Esophagus muscularis mucosa (tissue), 4 donors: ENCODE measurements at regions of chr15 and their contacts with region 1.

Region 1: DNA sequence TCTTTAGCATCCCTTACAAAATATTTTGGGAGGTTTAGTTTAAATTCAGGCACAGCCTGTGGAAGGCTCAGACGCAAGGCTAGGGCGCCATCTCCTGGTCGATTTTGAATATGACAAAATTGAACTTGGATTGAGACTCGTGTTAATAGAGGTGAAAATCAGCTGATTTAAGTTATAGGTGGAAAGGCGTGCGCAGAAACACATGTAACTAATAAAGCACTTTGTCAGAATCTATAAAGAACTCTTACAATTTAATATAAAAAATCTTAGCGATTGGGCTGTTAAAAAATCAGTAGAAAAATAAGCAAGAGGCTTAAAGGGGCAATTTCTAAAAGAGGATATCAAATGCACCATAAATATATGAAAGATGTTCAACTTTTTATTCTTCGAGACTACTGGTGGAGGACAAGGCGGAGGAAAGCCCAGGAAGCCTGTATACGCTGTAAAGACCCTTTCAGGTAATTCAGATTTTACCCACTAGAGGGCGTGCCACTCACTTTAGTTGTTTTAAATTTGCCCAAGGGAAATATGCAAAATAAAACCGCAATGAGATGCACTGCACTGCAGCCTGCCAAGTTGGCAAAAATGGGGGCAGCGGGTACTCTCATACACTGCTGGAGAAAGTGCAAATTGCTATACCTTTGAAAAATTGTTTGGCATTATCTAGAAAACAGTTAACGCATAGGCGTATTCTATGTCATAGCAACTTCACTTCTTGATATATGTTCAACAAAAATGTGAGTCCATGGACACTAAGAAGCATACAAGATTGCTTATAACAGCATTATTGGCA is 64.7 kb downstream of the SLC30A4 start:
- DNase-seq: no peak
- H3K4me3 ChIP-seq: peak overlapping the region; percentile 45 to 62 (median 56)
- H3K27ac ChIP-seq: peak overlapping the region; percentile 72 to 77 (median 75)
- H3K4me1 ChIP-seq: peaks cover 0 to 10% (median 8%) of the 10 kb centered on the region in 4 donors
- H3K27me3 ChIP-seq: no peaks in the 10 kb centered on the region
- CTCF ChIP-seq: peak; percentile 70 to 80 (median 72)
- EP300 ChIP-seq: no peak
- POLR2A ChIP-seq: no peak

Region 2: GRCh38 chr15:45166834-45167630 is 290.8 kb before region 1 on chr15:
- intact Hi-C with region 1: loop called (anchors 2 kb)
- DNase-seq: peak; percentile 95
- H3K4me3 ChIP-seq: peak overlapping the region; percentile 69 to 87 (median 82)
- H3K27ac ChIP-seq: peak overlapping the region; percentile 98 to 100 (median 98)
- H3K4me1 ChIP-seq: peaks cover 17 to 47% (median 37%) of the 10 kb centered on the region in 4 donors
- H3K27me3 ChIP-seq: no peaks in the 10 kb centered on the region
- CTCF ChIP-seq: peak; percentile 30 to 78 (median 46)
- EP300 ChIP-seq: no peak
- POLR2A ChIP-seq: no peak

Region 3: GRCh38 chr15:45287390-45287956 is 170.4 kb before region 1 on chr15:
- intact Hi-C with region 1: loop called (anchors 10 kb)
- DNase-seq: peak; percentile 66
- H3K4me3 ChIP-seq: no peak overlapping the region
- H3K27ac ChIP-seq: no peak overlapping the region
- H3K4me1 ChIP-seq: peaks cover 0 to 9% (median 0%) of the 10 kb centered on the region in 4 donors
- H3K27me3 ChIP-seq: peaks cover 0 to 7% (median 0%) of the 10 kb centered on the region in 4 donors
- CTCF ChIP-seq: no peak
- EP300 ChIP-seq: no peak
- POLR2A ChIP-seq: no peak

Region 4: GRCh38 chr15:45429974-45430792 is 27.7 kb before region 1 on chr15:
- intact Hi-C with region 1: loop called (anchors 2 kb)
- DNase-seq: peak; percentile 92
- H3K4me3 ChIP-seq: peak overlapping the region; percentile 44 to 53 (median 47)
- H3K27ac ChIP-seq: no peak overlapping the region
- H3K4me1 ChIP-seq: peaks cover 4 to 9% (median 7%) of the 10 kb centered on the region in 4 donors
- H3K27me3 ChIP-seq: peaks cover 0 to 15% (median 0%) of the 10 kb centered on the region in 4 donors
- CTCF ChIP-seq: peak; percentile 77 to 96 (median 90)
- EP300 ChIP-seq: no peak
- POLR2A ChIP-seq: no peak

Region 5: DNA sequence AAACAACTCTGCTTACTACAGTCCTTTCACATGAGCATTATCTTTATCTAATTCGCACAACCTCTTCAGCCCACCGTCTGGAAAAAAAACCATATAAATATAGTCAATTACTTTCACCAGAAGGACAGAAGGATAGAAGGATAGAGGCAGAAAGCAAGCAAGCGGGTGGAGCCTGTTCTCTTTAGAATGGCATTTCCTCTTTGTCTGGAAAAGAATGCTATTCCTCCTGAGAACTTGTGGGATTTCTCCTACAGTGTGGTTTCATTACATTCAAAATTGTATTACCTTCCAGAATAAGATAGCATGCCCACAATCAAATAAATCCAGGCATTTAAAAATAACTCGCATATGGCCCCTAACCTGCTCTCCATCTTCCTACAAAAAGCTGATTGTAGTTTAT is 41.6 kb after region 1 on chr15:
- intact Hi-C with region 1: no loop called
- DNase-seq: no peak
- H3K4me3 ChIP-seq: no peak overlapping the region
- H3K27ac ChIP-seq: no peak overlapping the region
- H3K4me1 ChIP-seq: no peaks in the 10 kb centered on the region
- H3K27me3 ChIP-seq: no peaks in the 10 kb centered on the region
- CTCF ChIP-seq: no peak
- EP300 ChIP-seq: no peak
- POLR2A ChIP-seq: no peak

Region 6: DNA sequence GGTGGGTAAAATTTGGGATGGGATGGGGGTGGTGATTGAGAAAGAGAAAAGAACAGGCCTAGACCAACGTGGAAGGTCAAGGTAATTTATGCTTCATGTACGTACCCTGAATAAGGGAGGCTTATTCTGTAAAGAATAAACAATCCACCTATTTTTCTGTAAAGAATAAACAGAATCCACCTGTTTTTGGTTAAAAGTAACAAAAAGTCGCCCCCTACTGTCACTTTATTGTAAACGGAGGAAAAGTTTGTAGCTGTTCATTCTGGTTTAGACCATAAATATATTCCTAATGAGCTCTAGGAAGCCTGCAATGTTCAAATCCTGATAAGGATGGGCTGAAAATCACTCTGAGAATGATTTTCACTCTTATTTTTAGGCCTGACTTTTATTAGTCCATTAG is 153.5 kb after region 1 on chr15:
- intact Hi-C with region 1: loop called (anchors 2 kb)
- DNase-seq: no peak
- H3K4me3 ChIP-seq: no peak overlapping the region
- H3K27ac ChIP-seq: no peak overlapping the region
- H3K4me1 ChIP-seq: peaks cover 0 to 7% (median 0%) of the 10 kb centered on the region in 4 donors
- H3K27me3 ChIP-seq: no peaks in the 10 kb centered on the region
- CTCF ChIP-seq: peak in 2 of 3 experiments; percentile 26 to 35
- EP300 ChIP-seq: no peak
- POLR2A ChIP-seq: no peak